Mammary epithelial cell (primary cell): ENCODE measurements at regions of chr7 and their contacts with region 1.

Region 1: GRCh38 chr7:85030893-85031292 is 156.0 kb downstream of the SEMA3D start:
- DNase-seq: peak; percentile 15
- H3K4me3 ChIP-seq: no peak overlapping the region
- H3K27ac ChIP-seq: no peak overlapping the region
- H3K4me1 ChIP-seq: no peaks in the 10 kb centered on the region
- H3K27me3 ChIP-seq: no peaks in the 10 kb centered on the region
- CTCF ChIP-seq: peak; percentile 37 to 49

Region 2: DNA sequence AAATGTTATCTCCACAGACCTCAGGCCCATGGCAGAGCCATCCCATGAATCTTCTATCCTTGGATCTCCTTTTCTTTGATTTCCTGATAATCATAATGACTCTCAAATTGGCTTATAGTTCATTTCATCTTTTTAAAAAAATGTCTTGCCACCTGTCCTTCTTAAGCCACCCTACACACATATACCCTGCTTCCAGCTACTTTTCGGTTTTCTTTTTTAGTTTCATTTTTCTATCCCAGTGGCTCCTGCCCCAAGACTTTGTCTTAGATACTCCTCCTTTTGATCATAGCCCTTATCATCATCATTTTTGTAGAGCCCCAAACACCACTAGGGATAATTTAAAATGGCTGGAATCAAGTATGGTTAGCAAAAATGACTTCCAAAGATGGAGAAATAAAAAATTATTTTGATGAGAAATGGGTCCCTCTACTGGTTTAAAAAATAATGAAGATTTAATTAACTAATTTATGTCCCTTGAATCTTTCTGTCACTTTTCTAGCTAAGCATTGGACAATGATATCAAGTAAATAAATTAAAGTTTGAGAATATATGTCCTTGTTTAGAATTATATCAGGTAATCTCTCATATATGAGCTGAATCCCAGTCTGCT is 433.3 kb after region 1 on chr7:
- CTCF ChIA-PET with region 1: no interaction called
- dilution Hi-C with region 1: no loop called
- in situ Hi-C with region 1: loop called (anchors 25 kb)
- intact Hi-C with region 1: loop called (anchors 2 kb)
- DNase-seq: no peak
- H3K4me3 ChIP-seq: no peak overlapping the region
- H3K27ac ChIP-seq: no peak overlapping the region
- H3K4me1 ChIP-seq: no peaks in the 10 kb centered on the region
- H3K27me3 ChIP-seq: no peaks in the 10 kb centered on the region
- CTCF ChIP-seq: peak; percentile 19 to 21

Region 3: DNA sequence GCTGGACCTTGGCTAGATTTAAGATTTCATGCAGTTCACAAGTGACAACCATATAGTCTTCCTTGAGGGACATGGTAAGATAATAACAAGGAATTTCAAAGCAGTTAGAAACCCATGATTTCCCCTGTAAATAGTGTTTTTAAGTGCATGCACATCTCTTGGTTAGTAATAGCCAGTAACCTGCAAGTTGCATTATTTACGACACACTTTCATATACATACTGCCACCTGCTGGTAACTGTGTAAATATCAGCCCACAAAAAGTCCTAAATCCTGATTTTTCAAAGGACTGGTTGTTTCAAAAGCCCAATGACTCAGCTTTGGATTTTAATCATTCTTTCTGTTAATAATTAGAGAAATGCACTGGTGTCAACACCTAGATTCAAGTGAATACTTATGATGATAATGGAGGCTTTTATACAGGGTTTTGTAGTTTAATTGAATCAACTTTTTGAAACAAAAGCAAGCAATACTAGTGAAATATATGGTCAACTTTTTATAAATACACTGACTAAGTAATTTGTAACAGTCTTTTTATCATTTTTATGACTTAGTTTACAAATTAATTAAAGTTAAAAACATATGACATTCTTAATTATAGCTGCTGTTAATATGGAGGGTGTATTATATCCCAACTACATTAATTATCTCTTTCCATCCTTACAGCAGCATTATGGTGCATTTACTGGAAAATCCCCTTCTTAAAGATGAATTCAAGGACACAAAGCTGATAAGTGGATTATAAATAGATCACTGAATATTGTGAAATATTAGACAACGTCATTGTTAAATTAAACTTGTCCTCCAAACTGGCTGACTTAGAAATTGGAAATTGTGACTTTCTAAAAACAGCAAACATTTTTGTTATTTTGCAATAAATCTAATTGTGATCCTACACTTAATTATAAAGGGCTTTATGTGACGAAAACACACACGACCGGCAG is 523.6 kb after region 1 on chr7:
- CTCF ChIA-PET with region 1: no interaction called
- dilution Hi-C with region 1: no loop called
- in situ Hi-C with region 1: loop called (anchors 25 kb)
- intact Hi-C with region 1: loop called (anchors 2 kb)
- DNase-seq: peak; percentile 55
- H3K4me3 ChIP-seq: no peak overlapping the region
- H3K27ac ChIP-seq: no peak overlapping the region
- H3K4me1 ChIP-seq: no peaks in the 10 kb centered on the region
- H3K27me3 ChIP-seq: peaks cover 1% of the 10 kb centered on the region
- CTCF ChIP-seq: peak; percentile 55 to 71

Region 4: DNA sequence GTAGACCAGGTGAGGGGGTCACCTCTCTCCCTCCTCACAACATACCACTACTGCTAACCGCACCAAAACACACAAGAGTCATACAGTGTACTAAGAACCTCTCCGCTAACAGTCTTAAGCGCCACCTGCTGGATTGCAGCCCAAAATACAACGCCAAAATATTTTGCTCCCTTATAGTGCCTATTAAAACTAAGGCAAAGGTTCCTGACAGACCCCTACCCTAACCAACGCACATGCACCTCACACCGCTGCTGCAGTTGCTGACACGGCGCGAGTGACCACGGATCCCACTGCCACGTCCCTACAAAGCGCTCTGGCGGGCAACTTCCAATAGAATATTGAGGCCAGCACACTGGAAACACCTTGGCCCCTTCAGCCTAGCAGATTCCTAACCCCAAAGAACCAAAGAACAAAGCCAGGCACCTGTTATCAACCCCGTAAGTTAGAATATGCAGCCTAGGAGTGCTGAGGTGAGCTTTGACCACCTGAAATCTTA is 719.6 kb after region 1 on chr7:
- CTCF ChIA-PET with region 1: no interaction called
- dilution Hi-C with region 1: no loop called
- in situ Hi-C with region 1: no loop called
- intact Hi-C with region 1: loop called (anchors 1 kb)
- DNase-seq: peak; percentile 21
- H3K4me3 ChIP-seq: no peak overlapping the region
- H3K27ac ChIP-seq: no peak overlapping the region
- H3K4me1 ChIP-seq: no peaks in the 10 kb centered on the region
- H3K27me3 ChIP-seq: peaks cover 2% of the 10 kb centered on the region
- CTCF ChIP-seq: peak; percentile 60 to 88

Region 5: DNA sequence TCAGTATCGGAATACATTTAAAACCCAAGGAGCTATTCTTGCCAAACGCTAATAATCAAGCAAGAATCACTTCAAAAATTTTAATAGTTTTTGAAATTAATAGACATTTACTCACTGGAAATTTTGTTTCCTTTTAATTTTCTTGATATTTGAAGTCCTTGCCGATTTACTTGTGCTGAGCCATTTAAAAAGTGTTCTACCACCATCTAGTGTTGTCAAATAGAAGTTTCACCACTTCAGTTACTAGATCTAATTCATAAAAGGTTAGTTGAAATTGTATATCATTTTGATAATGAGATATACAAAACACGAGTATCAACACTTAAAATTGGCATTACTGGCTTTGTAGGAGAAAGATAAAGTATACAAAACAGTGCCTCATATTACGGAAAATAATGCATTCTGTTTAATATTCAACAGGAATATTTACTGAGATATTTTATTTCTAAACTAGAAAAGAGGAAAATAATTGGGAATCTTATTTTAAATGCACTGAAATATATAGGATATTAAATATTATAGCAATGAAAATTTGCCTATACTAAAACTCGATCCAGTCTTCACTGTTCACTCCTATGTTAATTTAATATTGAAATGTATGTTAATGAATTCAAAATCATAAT is 820.8 kb after region 1 on chr7:
- CTCF ChIA-PET with region 1: no interaction called
- dilution Hi-C with region 1: no loop called
- in situ Hi-C with region 1: loop called (anchors 25 kb)
- intact Hi-C with region 1: loop called (anchors 2 kb)
- DNase-seq: peak; percentile 13
- H3K4me3 ChIP-seq: no peak overlapping the region
- H3K27ac ChIP-seq: no peak overlapping the region
- H3K4me1 ChIP-seq: no peaks in the 10 kb centered on the region
- H3K27me3 ChIP-seq: no peaks in the 10 kb centered on the region
- CTCF ChIP-seq: peak; percentile 35 to 51

Region 6: GRCh38 chr7:86469680-86470295 is 1438.9 kb after region 1 on chr7:
- CTCF ChIA-PET with region 1: interaction called, 10 read pairs
- dilution Hi-C with region 1: no loop called
- in situ Hi-C with region 1: no loop called
- intact Hi-C with region 1: no loop called
- DNase-seq: peak; percentile 59
- H3K4me3 ChIP-seq: no peak overlapping the region
- H3K27ac ChIP-seq: no peak overlapping the region
- H3K4me1 ChIP-seq: no peaks in the 10 kb centered on the region
- H3K27me3 ChIP-seq: no peaks in the 10 kb centered on the region
- CTCF ChIP-seq: peak; percentile 76 to 77